ENCODE measurements at regions of chr6 and their contacts with region 1.

Region 1: DNA sequence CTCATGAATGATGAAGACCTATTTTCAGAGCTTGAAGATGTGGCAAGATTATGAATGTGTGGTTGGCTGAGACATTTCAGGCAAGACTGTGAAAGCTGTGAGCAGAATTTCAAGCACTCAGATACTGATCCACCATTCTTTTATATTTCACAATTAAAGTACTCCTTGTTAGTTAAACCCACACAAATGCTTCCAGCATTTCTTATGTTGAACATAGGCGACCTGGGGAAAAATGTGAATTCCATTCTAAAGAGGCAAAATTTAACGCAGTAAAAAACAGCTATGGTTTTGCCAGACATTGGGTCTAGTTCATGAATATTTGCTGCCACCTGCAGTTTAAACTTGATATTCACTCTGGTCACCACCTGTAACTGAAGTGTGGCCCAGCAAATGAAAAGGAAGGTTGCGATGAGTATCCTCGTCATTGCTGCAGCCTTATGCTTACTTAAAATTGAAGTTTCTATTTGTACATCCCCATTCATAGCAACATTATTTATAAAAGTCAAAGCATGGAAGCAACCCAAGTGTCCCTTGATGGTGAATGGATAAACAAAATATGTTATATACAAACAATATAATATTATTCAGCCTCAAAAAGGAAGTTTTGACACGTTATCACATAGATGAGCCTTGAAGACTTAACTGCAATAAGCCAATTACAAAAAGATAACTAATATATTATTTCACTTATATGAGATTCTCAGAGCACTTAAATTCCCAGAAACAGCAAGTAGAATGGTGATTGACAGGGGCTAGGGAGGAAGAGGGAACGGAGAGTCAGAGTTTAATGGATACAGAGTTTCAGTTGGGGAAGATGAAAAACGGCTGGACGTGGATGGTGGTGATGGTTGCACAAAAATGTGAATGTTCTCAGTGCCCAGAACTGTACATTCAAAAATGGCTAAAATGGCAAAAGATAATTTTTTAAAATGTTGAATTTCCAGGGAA is 32.4 kb upstream of the FAM184A start:
- DNase-seq: peak; percentile 64
- H3K4me3 ChIP-seq: no peak overlapping the region
- H3K27ac ChIP-seq: no peak overlapping the region
- H3K4me1 ChIP-seq: no peaks in the 10 kb centered on the region
- H3K27me3 ChIP-seq: no peaks in the 10 kb centered on the region
- CTCF ChIP-seq: peak; percentile 31 to 34
- POLR2A ChIP-seq: no peak

Region 2: DNA sequence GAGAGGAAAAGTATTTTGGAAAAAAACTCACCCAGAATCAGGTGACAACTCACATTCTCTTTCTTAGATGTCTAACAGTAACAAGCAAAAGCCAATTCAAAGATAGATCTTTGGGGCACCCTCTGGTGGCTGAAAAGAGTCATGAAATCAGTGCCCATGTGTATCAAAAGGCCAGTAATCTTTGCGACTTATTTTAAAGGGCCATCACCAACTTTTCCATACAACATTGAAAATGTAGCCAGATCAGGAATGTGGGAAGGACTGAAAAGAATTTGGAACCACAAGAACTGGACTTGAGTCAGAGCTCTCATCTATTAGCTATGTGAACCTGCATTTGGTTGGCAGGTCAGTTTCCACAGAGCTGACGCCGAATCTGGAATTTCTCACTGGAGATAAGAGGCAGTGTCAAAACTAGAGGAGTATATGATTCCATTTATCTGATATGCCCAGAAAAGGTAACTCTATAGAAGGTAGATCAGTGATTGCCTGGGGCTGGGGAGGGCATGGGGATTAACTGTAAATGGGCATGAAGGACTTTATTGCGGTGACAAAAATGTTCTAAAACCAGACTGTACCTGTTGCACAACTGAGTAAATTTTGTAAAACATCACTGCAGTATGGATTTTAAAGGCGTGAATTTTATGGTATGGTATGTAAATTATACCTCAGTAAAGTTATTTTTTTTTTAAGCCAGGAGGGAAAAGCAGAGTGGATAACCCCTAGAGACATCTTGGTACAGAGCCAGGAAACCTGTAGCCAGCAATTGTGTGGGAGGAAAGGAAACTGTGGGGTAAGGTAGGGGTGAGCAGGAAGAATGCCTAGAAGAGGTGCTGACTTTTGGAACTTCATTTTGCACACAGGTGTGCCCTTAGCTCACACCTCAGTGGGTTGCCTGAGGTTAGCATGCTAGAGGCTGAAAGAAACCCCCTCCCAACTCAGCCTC is 334.0 kb before region 1 on chr6:
- CTCF ChIA-PET with region 1: interaction called, 3 read pairs
- POLR2A ChIA-PET with region 1: no interaction called
- dilution Hi-C with region 1: no loop called
- intact Hi-C with region 1: loop called (anchors 1 kb)
- DNase-seq: peak; percentile 84
- H3K4me3 ChIP-seq: no peak overlapping the region
- H3K27ac ChIP-seq: no peak overlapping the region
- H3K4me1 ChIP-seq: no peaks in the 10 kb centered on the region
- H3K27me3 ChIP-seq: peaks cover 7% of the 10 kb centered on the region in 2 experiments
- CTCF ChIP-seq: peak; percentile 58 to 59
- POLR2A ChIP-seq: no peak

Region 3: DNA sequence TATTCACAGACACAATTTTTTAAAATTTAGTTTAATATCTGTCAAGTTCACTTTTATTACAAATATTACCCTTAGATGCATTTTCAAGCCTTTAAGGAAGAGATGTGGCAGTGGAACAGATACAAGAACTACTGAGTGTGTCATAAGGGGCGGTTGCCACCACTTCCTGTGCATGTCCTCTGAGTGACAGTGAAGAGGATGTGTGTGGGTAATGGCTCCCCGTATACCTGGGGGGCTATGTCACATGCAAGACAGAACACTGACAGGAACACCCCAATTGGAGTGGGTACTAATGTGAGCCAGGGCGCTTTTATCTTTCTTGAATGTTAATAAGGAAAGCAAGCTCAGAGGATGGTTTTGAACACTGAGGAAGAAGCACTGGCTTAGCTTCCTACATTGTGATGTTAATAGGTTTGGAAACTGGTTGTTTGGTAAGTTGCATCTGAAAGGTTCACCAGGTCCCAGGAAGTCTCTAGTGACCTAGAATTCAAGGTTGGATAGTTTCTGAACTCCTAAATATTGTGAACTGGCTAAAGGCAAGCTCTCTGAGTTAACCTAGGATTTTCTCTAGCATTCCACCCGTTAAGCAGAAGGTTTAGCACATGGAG is 300.4 kb before region 1 on chr6:
- CTCF ChIA-PET with region 1: no interaction called
- POLR2A ChIA-PET with region 1: no interaction called
- dilution Hi-C with region 1: no loop called
- intact Hi-C with region 1: no loop called
- DNase-seq: no peak
- H3K4me3 ChIP-seq: no peak overlapping the region
- H3K27ac ChIP-seq: no peak overlapping the region
- H3K4me1 ChIP-seq: no peaks in the 10 kb centered on the region
- H3K27me3 ChIP-seq: no peaks in the 10 kb centered on the region
- CTCF ChIP-seq: no peak
- POLR2A ChIP-seq: no peak

Region 4: DNA sequence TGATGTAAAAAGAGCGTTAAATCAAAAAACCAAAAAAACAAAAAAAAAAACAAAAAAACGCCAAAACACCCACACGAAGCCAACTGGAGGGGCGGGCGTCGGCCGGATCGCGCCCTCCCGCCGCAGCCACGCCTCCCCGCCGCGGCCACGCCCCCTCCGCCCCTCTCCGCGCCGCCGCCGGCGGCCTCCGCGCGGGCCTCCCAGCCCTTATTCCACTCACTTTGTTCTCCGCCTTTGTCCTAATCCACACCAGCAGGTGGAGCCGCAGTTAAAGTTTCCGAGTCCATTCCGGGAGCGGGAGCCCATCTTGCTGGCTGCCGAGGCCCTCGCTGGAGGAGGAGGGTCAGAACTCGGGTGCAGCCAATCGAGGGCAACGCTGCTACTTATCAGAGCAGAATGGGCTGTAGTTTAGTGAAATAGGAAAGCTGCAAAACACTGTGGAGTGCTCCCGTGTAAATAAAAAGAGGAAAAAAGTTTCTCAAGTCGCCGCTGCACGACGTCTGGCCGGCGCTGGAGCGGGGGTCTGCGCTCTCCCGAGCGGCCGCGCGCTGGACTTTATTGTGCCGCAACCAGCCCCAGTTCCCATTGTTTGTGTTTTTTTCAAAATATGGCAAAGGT is 217.0 kb before region 1 on chr6 and contains the start of gene ASF1A:
- CTCF ChIA-PET with region 1: interaction called, 16 read pairs
- POLR2A ChIA-PET with region 1: no interaction called
- dilution Hi-C with region 1: no loop called
- intact Hi-C with region 1: loop called (anchors 1 kb)
- DNase-seq: peak; percentile 98
- H3K4me3 ChIP-seq: peak within 1 kb of the TSS; percentile 64 to 99 (median 87)
- H3K27ac ChIP-seq: peak within 1 kb of the TSS; percentile 91
- H3K4me1 ChIP-seq: peaks cover 18% of the 10 kb centered on the region
- H3K27me3 ChIP-seq: no peaks in the 10 kb centered on the region
- CTCF ChIP-seq: peak; percentile 65 to 69
- POLR2A ChIP-seq: peak; percentile 89
- total RNA-seq, gene ASF1A: 38.4 TPM in 2 replicates

Region 5: GRCh38 chr6:118968416-118968815 is 142.5 kb before region 1 on chr6:
- CTCF ChIA-PET with region 1: interaction called, 410 read pairs
- POLR2A ChIA-PET with region 1: no interaction called
- dilution Hi-C with region 1: no loop called
- intact Hi-C with region 1: loop called (anchors 1 kb)
- DNase-seq: peak; percentile 44
- H3K4me3 ChIP-seq: no peak overlapping the region
- H3K27ac ChIP-seq: no peak overlapping the region
- H3K4me1 ChIP-seq: no peaks in the 10 kb centered on the region
- H3K27me3 ChIP-seq: no peaks in the 10 kb centered on the region
- CTCF ChIP-seq: peak; percentile 7 to 28
- POLR2A ChIP-seq: no peak

Region 6: DNA sequence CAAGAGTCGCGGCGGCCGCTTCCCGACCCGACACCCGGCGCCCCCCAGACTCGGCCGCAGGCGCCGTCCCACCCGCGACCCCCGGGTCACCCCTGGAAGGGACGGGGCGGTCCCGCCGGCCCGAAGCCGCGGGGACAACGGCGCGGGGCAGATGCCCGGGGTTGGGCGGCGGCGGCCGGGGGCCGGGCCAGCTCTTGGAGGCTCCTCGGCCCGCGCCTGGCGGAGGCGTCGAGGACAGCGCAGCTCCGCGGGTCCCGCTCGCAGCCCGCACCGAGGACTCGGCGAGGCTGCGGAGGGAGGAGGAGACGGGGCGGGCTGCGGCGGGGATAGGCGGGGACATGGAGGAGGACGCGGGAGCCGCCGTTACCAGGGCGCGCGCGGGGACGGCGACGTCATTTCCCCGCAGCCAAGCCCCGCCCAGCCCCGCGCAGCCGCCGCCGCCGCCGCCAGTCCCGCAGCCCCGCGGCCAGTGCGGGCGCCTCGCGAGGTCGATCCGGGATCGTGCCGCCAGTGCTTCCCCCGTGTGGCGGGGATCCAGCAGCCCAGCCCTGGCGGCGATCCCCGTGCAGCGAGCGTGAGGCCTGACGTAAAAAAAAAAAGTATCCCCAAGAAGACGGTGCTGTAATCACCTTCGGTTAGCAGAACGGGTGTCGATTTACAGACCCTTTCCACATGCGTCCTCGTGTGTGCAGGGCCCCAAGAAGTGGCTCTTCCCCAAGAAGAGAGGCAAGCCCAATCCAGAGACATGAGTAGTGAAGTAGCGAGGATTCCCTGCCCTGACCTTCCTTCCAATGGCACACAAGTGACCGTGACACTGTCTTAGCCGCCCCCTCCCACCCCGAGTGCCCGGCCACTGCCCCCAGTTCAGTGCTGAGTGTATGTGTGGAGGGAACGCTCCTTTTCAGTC is 32.2 kb before region 1 on chr6 and contains the start of gene FAM184A:
- CTCF ChIA-PET with region 1: interaction called, 9 read pairs
- POLR2A ChIA-PET with region 1: no interaction called
- dilution Hi-C with region 1: no loop called
- intact Hi-C with region 1: loop called (anchors 2 kb)
- DNase-seq: peak; percentile 67
- H3K4me3 ChIP-seq: peak within 1 kb of the TSS; percentile 48 to 68 (median 50)
- H3K27ac ChIP-seq: no peak within 1 kb of the TSS
- H3K4me1 ChIP-seq: peaks cover 21% of the 10 kb centered on the region
- H3K27me3 ChIP-seq: peaks cover 16 to 23% of the 10 kb centered on the region in 2 experiments
- CTCF ChIP-seq: peak; percentile 16 to 63
- POLR2A ChIP-seq: no peak
- total RNA-seq, gene FAM184A: 0.84 and 0.95 TPM in 2 replicates

Region 7: DNA sequence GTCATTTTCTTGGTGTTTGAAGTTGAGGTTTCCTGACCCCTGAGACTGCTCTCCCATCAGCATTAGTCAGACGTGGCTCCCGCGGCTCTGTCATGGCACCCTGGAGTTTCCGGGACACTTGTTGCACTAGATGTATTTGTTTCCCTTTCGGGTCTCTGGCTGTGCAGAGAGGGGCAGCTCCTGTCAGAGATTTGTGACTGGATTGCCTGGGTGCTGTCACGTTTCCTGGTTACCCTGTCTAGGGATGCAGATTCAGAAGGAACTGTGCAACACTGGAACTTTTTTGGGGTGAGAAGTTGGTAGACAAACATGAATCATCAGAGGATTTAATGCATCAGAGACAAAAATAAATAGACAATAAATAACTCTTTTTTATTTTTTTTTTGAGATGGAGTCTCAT is 670.5 kb after region 1 on chr6:
- CTCF ChIA-PET with region 1: no interaction called
- POLR2A ChIA-PET with region 1: no interaction called
- dilution Hi-C with region 1: no loop called
- intact Hi-C with region 1: no loop called
- DNase-seq: no peak
- H3K4me3 ChIP-seq: no peak overlapping the region
- H3K27ac ChIP-seq: no peak overlapping the region
- H3K4me1 ChIP-seq: no peaks in the 10 kb centered on the region
- H3K27me3 ChIP-seq: no peaks in the 10 kb centered on the region
- CTCF ChIP-seq: no peak
- POLR2A ChIP-seq: no peak